Dendritic cell treated with granulocyte-macrophage colony-stimulating factor and Interleukin-4, amounts not matched to agents 40 ng/mL and 50 ng/mL, for 4 days (primary cell): ENCODE measurements at regions of chr4 and their contacts with region 1.

Region 1: DNA sequence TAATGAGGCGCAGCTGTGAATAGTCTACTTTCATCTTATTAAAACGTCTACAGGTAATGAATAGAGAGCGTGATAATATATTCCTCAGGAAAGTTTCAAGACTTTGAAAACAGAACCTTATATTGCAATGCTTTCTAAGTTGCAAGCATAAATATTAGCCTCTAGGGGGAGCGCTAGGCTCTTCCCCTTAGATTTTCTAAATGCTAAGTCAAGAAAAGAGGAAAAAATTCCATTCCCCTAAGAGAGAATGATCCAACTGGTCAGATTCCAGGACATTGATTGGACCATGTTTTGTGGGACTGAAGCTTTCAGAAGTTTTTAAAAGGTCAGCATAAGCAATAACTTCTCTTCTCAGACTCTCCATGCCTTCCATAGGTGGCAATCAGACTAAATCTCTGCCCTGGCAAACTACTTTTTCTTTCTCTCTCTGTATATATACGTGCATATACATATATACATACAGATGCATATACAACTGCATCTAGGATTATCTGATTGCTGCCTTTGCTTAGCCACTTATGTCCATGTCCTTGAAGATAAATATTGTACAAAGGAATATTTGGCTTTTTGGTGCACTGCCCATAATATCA is 492.9 kb downstream of the INPP4B start:
- H3K4me3 Mint-ChIP-seq: no peak overlapping the region
- H3K27ac Mint-ChIP-seq: no peak overlapping the region
- H3K4me1 Mint-ChIP-seq: peaks cover 6% of the 10 kb centered on the region
- H3K27me3 Mint-ChIP-seq: no peaks in the 10 kb centered on the region

Region 2: DNA sequence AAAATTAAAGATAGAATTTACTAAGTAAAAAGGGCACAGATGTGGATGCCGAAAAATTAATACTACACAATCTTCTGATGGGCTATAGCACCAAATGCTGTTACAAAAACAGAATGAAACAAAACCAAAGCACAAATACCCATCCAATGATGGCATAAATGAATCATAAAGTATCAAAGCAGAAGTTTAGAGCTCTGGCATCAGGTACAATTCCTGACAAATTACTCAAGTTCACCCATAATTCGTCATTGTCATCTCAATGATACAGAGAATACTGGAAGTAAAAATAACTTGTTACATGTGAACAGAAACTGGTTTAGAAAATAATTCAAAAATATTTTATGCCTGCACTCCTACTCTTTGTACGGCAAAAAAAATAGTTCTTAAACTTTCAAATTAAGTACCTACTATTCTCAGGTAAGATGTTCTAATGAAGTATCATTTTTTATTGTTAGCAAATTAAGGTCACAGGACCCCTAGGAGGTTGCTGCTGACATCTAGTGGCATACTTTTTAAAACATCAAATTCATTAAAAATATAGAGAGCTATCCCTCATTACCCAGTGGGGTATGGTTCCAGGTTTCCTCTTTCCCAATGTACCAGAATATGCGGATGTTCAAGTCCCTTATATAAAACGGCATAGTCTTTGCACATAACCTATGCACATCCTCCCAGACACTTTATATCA is 366.8 kb after region 1 on chr4:
- intact Hi-C with region 1: loop called (anchors 5 kb)
- H3K4me3 Mint-ChIP-seq: no peak overlapping the region
- H3K27ac Mint-ChIP-seq: no peak overlapping the region
- H3K4me1 Mint-ChIP-seq: no peaks in the 10 kb centered on the region
- H3K27me3 Mint-ChIP-seq: no peaks in the 10 kb centered on the region